Head of caudate nucleus (tissue), 42 donors: ENCODE measurements at regions of chr3 and their contacts with region 1.

Region 1: DNA sequence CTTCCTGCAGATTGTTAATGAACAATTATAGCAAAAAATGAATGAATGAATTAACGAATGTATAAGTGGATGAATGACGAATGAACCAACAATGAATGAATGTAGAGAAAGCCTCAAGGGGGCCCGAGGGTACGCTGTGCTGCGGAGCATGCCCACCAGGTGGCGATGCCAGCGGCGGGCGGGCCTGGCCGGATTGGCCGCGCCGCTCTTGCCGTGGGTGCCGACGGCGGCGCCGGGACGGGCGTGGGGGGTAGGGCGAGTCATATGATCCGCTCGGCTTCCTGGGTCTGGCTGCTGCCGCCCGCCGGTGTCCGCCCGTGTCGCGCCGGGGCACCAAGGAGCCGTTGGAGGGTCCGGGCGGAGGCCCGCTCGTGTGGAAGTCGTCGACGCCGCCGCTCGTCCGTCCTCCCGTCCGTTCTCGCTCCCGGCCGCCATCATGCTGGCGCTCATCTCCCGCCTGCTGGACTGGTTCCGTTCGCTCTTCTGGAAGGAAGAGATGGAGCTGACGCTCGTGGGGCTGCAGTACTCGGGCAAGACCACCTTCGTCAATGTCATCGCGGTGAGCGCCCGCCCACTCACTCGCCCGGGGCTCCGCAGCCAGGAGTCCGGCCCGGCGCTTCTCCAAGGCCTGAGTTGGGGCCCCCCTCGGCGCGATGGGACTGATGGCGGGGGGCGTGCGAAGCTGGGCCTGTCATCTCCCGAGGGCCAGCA is at the start of gene ARL8B:
- DNase-seq: peak; percentile 78 to 97 (median 94)

Region 2: GRCh38 chr3:4493014-4493940 is 628.9 kb before region 1 on chr3 and contains the start of gene ITPR1:
- intact Hi-C with region 1: loop called (anchors 10 kb)
- DNase-seq: peak; percentile 92 to 99 (median 98)

Region 3: GRCh38 chr3:5187156-5187919 is 65.2 kb after region 1 on chr3 and contains the start of gene EDEM1:
- intact Hi-C with region 1: loop called (anchors 5 kb)
- DNase-seq: peak; percentile 84 to 99 (median 96)